Tibial artery (tissue), 4 donors: ENCODE measurements at regions of chr10 and their contacts with region 1.

Region 1: GRCh38 chr10:125343118-125343925 is 183.0 kb upstream of the CTBP2 start:
- DNase-seq: no peak
- H3K4me3 ChIP-seq: no peak overlapping the region
- H3K27ac ChIP-seq: no peak overlapping the region
- H3K4me1 ChIP-seq: no peaks in the 10 kb centered on the region
- H3K27me3 ChIP-seq: no peaks in the 10 kb centered on the region
- CTCF ChIP-seq: peak; percentile 45 to 54

Region 2: GRCh38 chr10:124992462-124993344 is 350.6 kb before region 1 on chr10:
- intact Hi-C with region 1: loop called (anchors 10 kb)
- DNase-seq: peak; percentile 81 to 89
- H3K4me3 ChIP-seq: no peak overlapping the region
- H3K27ac ChIP-seq: peak overlapping the region; percentile 34 to 45
- H3K4me1 ChIP-seq: peaks cover 0 to 35% (median 12%) of the 10 kb centered on the region in 4 donors
- H3K27me3 ChIP-seq: no peaks in the 10 kb centered on the region
- CTCF ChIP-seq: peak; percentile 78 to 85